ENCODE measurements at regions of chr3 and their contacts with region 1.

Region 1: GRCh38 chr3:22189616-22190015 is 438.6 kb upstream of the ZNF385D start:
- DNase-seq: no peak
- ATAC-seq: no peak
- H3K4me3 ChIP-seq: no peak overlapping the region
- H3K27ac ChIP-seq: no peak overlapping the region
- H3K4me1 ChIP-seq: no peaks in the 10 kb centered on the region
- H3K27me3 ChIP-seq: no peaks in the 10 kb centered on the region
- CTCF ChIP-seq: no peak

Region 2: DNA sequence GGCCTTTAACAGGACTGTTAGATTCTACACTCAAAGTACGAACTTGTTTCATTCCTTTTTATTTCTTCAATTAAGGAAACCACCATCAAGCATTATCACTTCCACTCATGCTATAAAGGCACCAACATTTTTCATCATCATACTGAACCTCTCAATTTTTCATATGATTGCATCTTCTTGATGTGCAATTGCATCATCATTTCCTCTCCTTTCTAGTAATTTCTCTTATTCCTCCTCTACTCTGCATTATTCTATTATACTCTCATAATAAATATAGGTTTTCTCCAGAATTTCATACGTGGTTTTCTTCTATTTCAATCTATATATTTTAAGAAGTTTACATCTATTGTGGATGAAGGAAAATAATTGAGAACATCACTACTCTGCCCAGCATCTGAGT is 67.6 kb after region 1 on chr3:
- CTCF ChIA-PET with region 1: no interaction called
- POLR2A ChIA-PET with region 1: no interaction called
- intact Hi-C with region 1: loop called (anchors 5 kb)
- DNase-seq: no peak
- ATAC-seq: no peak
- H3K4me3 ChIP-seq: no peak overlapping the region
- H3K27ac ChIP-seq: no peak overlapping the region
- H3K4me1 ChIP-seq: no peaks in the 10 kb centered on the region
- H3K27me3 ChIP-seq: no peaks in the 10 kb centered on the region
- CTCF ChIP-seq: no peak

Region 3: DNA sequence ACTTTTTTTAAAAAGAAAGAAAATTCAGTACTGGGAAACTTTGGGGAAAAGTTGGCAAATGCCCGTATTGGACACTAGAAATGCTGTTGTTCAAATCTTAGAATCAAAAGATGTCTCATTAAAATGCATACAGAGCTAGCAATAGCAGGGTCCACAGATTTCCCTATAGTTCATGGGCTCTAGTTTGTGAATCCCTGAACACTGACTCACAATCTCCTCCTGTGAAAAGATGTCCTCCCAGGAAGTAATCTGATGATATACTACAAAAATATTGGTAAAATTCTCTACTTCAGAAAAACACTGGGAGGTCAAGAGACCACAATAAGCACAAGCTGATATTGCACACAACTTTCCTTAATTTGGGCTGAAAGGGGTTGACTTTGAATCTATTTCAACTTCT is 129.8 kb after region 1 on chr3:
- CTCF ChIA-PET with region 1: no interaction called
- POLR2A ChIA-PET with region 1: no interaction called
- intact Hi-C with region 1: no loop called
- DNase-seq: peak; percentile 37
- ATAC-seq: peak; percentile 62
- H3K4me3 ChIP-seq: no peak overlapping the region
- H3K27ac ChIP-seq: no peak overlapping the region
- H3K4me1 ChIP-seq: no peaks in the 10 kb centered on the region
- H3K27me3 ChIP-seq: no peaks in the 10 kb centered on the region
- CTCF ChIP-seq: no peak

Measured in PC-3 (cell line).